Transverse colon (tissue), 4 donors: ENCODE measurements at regions of chr20 and their contacts with region 1.

Region 1: GRCh38 chr20:11274141-11274594 is 600.4 kb upstream of the JAG1 start:
- DNase-seq: no peak
- H3K4me3 ChIP-seq: no peak overlapping the region
- H3K27ac ChIP-seq: no peak overlapping the region
- H3K4me1 ChIP-seq: peaks cover 0 to 6% (median 0%) of the 10 kb centered on the region in 4 donors
- H3K27me3 ChIP-seq: no peaks in the 10 kb centered on the region
- CTCF ChIP-seq: peak; percentile 32 to 57 (median 53)
- EP300 ChIP-seq: no peak
- POLR2A ChIP-seq: no peak

Region 2: GRCh38 chr20:10469599-10469998 is 804.6 kb before region 1 on chr20:
- in situ Hi-C with region 1: loop called in 1 of 4 experiments (anchors 25 kb)
- intact Hi-C with region 1: no loop called
- DNase-seq: peak; percentile 60
- H3K4me3 ChIP-seq: no peak overlapping the region
- H3K27ac ChIP-seq: peak overlapping the region in 3 of 4 donors; percentile 30 to 41 (median 37)
- H3K4me1 ChIP-seq: peaks cover 6 to 46% (median 13%) of the 10 kb centered on the region in 4 donors
- H3K27me3 ChIP-seq: no peaks in the 10 kb centered on the region
- CTCF ChIP-seq: peak; percentile 56 to 66 (median 60)
- EP300 ChIP-seq: no peak
- POLR2A ChIP-seq: no peak